Mammary epithelial cell (primary cell): ENCODE measurements at regions of chr4 and their contacts with region 1.

Region 1: GRCh38 chr4:62408454-62408853 is 1208.3 kb downstream of the ADGRL3 start:
- DNase-seq: no peak
- H3K4me3 ChIP-seq: no peak overlapping the region
- H3K27ac ChIP-seq: no peak overlapping the region
- H3K4me1 ChIP-seq: no peaks in the 10 kb centered on the region
- H3K27me3 ChIP-seq: no peaks in the 10 kb centered on the region
- CTCF ChIP-seq: no peak

Region 2: GRCh38 chr4:62015043-62015739 is 393.3 kb before region 1 on chr4:
- CTCF ChIA-PET with region 1: no interaction called
- dilution Hi-C with region 1: no loop called
- in situ Hi-C with region 1: no loop called
- intact Hi-C with region 1: no loop called
- DNase-seq: peak; percentile 1
- H3K4me3 ChIP-seq: no peak overlapping the region
- H3K27ac ChIP-seq: no peak overlapping the region
- H3K4me1 ChIP-seq: no peaks in the 10 kb centered on the region
- H3K27me3 ChIP-seq: no peaks in the 10 kb centered on the region
- CTCF ChIP-seq: no peak

Region 3: DNA sequence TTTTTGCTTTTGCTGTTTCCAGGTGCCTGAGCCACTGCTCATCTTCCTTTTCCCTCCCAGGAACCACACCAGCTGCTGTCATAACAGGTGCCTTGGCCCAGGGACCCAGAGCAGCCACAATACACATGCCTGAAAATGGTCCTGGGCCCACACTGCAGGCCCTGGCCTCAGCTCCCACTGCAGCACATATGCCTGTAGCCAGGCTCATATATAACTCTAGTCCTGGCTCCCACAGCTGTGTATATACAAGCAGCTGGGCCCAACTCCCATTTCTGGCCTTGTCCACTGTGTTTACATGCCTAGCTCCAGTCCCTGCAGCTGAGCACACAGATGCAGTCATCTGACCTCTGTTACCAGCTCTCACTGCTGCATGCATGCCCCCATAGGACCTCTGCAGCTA is 277.8 kb before region 1 on chr4:
- CTCF ChIA-PET with region 1: no interaction called
- dilution Hi-C with region 1: no loop called
- in situ Hi-C with region 1: no loop called
- intact Hi-C with region 1: no loop called
- DNase-seq: no peak
- H3K4me3 ChIP-seq: no peak overlapping the region
- H3K27ac ChIP-seq: no peak overlapping the region
- H3K4me1 ChIP-seq: no peaks in the 10 kb centered on the region
- H3K27me3 ChIP-seq: no peaks in the 10 kb centered on the region
- CTCF ChIP-seq: no peak

Region 4: DNA sequence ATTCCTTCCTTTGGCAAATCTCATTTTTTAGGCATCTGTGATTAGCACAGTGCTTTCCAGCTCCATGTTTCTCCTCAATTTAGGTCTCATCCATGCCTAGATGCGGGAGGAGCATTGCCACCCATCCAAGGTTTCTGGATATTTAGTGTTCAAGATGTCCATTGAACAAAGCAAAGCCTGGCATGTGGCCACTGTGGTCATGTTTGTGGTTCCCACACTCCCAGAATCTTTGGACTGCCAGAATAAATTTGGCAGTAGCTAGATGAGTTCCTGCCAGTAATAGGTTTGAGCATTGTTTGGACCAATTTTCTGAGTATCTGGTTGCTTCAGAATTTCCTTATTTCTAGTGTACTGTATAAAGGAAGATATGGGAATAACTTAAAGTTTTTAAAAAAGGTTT is 84.2 kb before region 1 on chr4:
- CTCF ChIA-PET with region 1: no interaction called
- dilution Hi-C with region 1: loop called (anchors 5 kb)
- in situ Hi-C with region 1: no loop called
- intact Hi-C with region 1: no loop called
- DNase-seq: no peak
- H3K4me3 ChIP-seq: no peak overlapping the region
- H3K27ac ChIP-seq: no peak overlapping the region
- H3K4me1 ChIP-seq: no peaks in the 10 kb centered on the region
- H3K27me3 ChIP-seq: no peaks in the 10 kb centered on the region
- CTCF ChIP-seq: no peak

Region 5: DNA sequence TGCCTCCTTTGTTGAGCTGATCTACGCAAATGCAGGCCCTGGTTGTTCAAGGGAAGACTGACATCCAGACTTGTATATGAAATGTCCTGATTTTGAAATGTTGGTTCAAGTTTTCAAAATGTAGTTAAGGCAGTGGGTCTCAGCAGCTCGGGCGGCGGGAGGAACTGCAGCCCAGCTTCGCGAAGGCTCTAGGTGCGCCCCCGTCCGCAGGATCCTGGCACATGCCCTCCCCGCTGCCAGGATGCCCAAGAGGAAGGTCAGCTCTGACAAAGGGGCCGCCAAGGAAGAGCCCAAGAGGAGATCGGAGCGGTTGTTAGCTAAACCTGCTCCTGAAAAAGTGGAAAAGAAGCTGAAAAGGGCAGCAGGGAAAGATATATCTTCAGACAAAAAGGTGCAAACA is 101.8 kb after region 1 on chr4:
- CTCF ChIA-PET with region 1: no interaction called
- dilution Hi-C with region 1: no loop called
- in situ Hi-C with region 1: no loop called
- intact Hi-C with region 1: no loop called
- DNase-seq: no peak
- H3K4me3 ChIP-seq: no peak overlapping the region
- H3K27ac ChIP-seq: no peak overlapping the region
- H3K4me1 ChIP-seq: no peaks in the 10 kb centered on the region
- H3K27me3 ChIP-seq: no peaks in the 10 kb centered on the region
- CTCF ChIP-seq: no peak

Region 6: GRCh38 chr4:62548108-62548524 is 139.7 kb after region 1 on chr4:
- CTCF ChIA-PET with region 1: no interaction called
- dilution Hi-C with region 1: no loop called
- in situ Hi-C with region 1: loop called in 1 of 2 experiments (anchors 25 kb)
- intact Hi-C with region 1: no loop called
- DNase-seq: no peak
- H3K4me3 ChIP-seq: no peak overlapping the region
- H3K27ac ChIP-seq: no peak overlapping the region
- H3K4me1 ChIP-seq: no peaks in the 10 kb centered on the region
- H3K27me3 ChIP-seq: peaks cover 10% of the 10 kb centered on the region
- CTCF ChIP-seq: no peak